ENCODE measurements at regions of chr19 and their contacts with region 1.

Region 1: GRCh38 chr19:54137086-54137921 is at the start of gene CNOT3:
- DNase-seq: peak; percentile 98 to 100
- ATAC-seq: peak; percentile 76 to 90 (median 79)
- H3K4me3 ChIP-seq: peak within 1 kb of the TSS; percentile 76
- H3K4me3 Mint-ChIP-seq: peak within 1 kb of the TSS; percentile 95
- H3K27ac ChIP-seq: peak within 1 kb of the TSS; percentile 94
- H3K27ac Mint-ChIP-seq: peak within 1 kb of the TSS; percentile 80 to 90
- H3K4me1 ChIP-seq: peaks cover 41% of the 10 kb centered on the region
- H3K4me1 Mint-ChIP-seq: peaks cover 50 to 58% of the 10 kb centered on the region in 2 donors
- H3K27me3 ChIP-seq: no peaks in the 10 kb centered on the region
- H3K27me3 Mint-ChIP-seq: no peaks in the 10 kb centered on the region
- CTCF ChIP-seq: no peak
- total RNA-seq, gene CNOT3: 46.3 to 73.9 (median 51.7) TPM

Region 2: GRCh38 chr19:54102421-54103169 is 34.7 kb before region 1 on chr19 and contains the start of gene NDUFA3:
- intact Hi-C with region 1: loop called (anchors 1 kb)
- DNase-seq: peak; percentile 95 to 100
- ATAC-seq: peak; percentile 99 to 100 (median 99)
- H3K4me3 ChIP-seq: peak within 1 kb of the TSS; percentile 74
- H3K4me3 Mint-ChIP-seq: peak within 1 kb of the TSS; percentile 97
- H3K27ac ChIP-seq: peak within 1 kb of the TSS; percentile 82
- H3K27ac Mint-ChIP-seq: peak within 1 kb of the TSS; percentile 89 to 99
- H3K4me1 ChIP-seq: peaks cover 14% of the 10 kb centered on the region
- H3K4me1 Mint-ChIP-seq: peaks cover 13 to 30% of the 10 kb centered on the region in 2 donors
- H3K27me3 ChIP-seq: no peaks in the 10 kb centered on the region
- H3K27me3 Mint-ChIP-seq: no peaks in the 10 kb centered on the region
- CTCF ChIP-seq: no peak
- total RNA-seq, gene NDUFA3: 48.4 to 91.9 (median 71.4) TPM

Region 3: DNA sequence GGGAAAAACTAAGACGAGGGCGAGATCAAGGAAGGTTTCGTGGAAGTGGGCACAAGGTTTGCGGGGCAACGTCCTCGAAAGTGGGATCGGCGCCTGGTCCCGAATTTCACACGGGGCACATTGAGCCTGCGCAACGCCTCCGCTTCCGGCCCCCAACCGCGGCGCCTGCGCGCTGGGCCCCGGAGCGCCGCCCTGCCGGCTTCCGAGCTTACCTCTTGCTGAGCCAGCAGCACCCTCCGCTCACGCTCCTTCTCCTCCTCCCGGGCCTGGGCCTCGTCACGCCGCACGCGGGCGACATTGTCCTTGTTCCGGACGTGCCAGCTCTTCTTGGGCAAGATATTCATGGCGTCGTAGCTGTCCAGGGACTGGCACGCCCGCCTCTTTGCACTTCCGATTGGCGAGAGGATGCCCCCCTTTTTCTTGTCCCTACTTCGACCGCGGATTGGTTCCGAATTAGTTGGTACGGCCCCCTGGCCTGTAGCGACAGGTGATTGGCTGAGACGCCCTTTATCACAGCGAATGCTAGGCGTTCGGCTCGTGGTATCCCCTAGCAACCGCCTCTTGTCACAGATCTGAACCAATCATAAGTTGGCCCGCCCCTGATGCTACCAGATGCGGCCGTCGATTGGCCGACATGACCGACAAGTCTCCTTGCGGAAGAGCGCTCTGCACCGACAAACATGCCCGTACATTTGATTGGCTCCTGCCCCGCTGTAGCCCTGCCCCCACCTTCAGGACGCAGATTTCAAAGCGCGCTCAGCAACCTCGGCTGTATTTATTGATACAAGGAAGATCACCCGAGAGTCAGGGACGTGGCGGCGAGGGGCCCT is 22.3 kb after region 1 on chr19 and contains the start of gene LENG1:
- intact Hi-C with region 1: loop called (anchors 1 kb)
- DNase-seq: peak; percentile 97 to 100
- ATAC-seq: peak; percentile 82 to 94 (median 86)
- H3K4me3 ChIP-seq: peak within 1 kb of the TSS; percentile 71
- H3K4me3 Mint-ChIP-seq: peak within 1 kb of the TSS; percentile 100
- H3K27ac ChIP-seq: peak within 1 kb of the TSS; percentile 86
- H3K27ac Mint-ChIP-seq: peak within 1 kb of the TSS; percentile 99 to 100
- H3K4me1 ChIP-seq: peaks cover 58% of the 10 kb centered on the region
- H3K4me1 Mint-ChIP-seq: peaks cover 54 to 65% of the 10 kb centered on the region in 2 donors
- H3K27me3 ChIP-seq: no peaks in the 10 kb centered on the region
- H3K27me3 Mint-ChIP-seq: no peaks in the 10 kb centered on the region
- CTCF ChIP-seq: peak; percentile 17
- total RNA-seq, gene LENG1: 8.3 to 9.4 (median 9.1) TPM